Activated CD4-positive, alpha-beta memory T cell treated with anti-CD3 and anti-CD28 coated beads, Interleukin-2, amount 10 ng/mL, durations not matched to agents 7 days and 5 days (primary cell): ENCODE measurements at regions of chr17 and their contacts with region 1.

Region 1: DNA sequence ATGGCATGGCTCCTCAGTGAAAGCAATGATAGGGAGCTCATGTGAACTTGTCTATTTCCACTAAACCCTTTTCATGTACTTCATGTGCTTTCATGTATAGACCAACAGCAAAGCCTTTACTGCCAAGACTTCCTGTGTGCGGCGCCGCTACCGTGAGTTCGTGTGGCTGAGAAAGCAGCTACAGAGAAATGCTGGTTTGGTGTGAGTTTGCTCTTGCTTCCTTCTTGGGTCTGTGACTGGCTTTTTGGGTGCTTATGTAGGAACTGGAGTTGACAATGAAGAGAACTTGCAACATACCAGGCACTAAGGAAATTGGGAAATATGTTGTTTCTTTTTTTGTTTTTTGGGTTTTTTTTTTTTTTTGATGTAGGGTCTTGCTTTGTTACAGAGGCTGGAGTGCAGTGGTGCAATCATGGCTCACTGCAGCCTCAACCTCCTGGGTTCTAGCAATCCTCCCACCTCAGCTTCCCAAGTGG is 5.7 kb downstream of the SNX11 start:
- DNase-seq: peak; percentile 69
- H3K4me3 Mint-ChIP-seq: no peak overlapping the region
- H3K27ac Mint-ChIP-seq: peak overlapping the region; percentile 85
- H3K4me1 Mint-ChIP-seq: peaks cover 46% of the 10 kb centered on the region
- H3K27me3 Mint-ChIP-seq: no peaks in the 10 kb centered on the region

Region 2: DNA sequence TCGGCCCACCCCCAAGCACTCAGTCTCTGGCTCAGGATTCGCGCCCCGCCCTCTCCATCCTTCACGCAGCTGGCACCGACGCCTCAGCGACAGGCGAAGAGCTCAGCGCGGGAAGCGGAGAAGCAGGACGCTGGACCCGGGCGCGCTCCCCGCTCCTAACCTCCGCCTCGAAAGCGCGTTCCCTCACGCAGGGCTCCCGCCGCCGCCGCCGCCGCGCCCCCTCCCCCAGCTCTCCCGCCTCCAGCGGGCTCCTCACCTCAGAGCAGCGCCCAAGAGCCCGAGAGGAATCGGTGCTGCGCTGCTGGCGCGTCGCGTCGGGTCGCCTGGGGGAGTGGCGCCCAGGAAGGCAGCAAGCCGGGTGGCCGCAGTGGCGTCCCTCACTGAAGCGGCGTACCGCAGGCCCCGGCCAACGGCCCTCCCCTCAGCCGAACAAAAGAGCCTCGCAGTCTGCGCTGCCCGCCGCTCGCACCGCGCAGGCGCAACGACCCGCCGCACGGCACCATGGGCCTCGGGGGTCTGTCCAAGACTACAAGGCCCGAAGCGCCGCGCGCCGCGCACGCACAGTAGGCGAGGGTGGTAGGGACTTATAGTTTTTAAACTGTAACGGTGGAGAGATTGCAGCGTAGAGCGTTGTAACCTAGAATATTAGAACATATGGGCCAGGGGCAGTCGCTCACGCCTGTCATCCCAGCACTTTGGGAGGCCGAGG is 12.1 kb before region 1 on chr17 and contains the start of gene CBX1:
- CTCF ChIA-PET with region 1: interaction called, 16 read pairs
- POLR2A ChIA-PET with region 1: interaction called, 7 read pairs
- DNase-seq: peak; percentile 95
- H3K4me3 Mint-ChIP-seq: peak within 1 kb of the TSS; percentile 94
- H3K27ac Mint-ChIP-seq: peak within 1 kb of the TSS; percentile 85
- H3K4me1 Mint-ChIP-seq: peaks cover 57% of the 10 kb centered on the region
- H3K27me3 Mint-ChIP-seq: no peaks in the 10 kb centered on the region
- total RNA-seq, gene CBX1: 48.3 to 50.8 TPM

Region 3: GRCh38 chr17:48131216-48131824 is 18.1 kb after region 1 on chr17:
- CTCF ChIA-PET with region 1: interaction called, 29 read pairs
- POLR2A ChIA-PET with region 1: interaction called, 4 read pairs
- DNase-seq: peak; percentile 41
- H3K4me3 Mint-ChIP-seq: no peak overlapping the region
- H3K27ac Mint-ChIP-seq: no peak overlapping the region
- H3K4me1 Mint-ChIP-seq: no peaks in the 10 kb centered on the region
- H3K27me3 Mint-ChIP-seq: no peaks in the 10 kb centered on the region